SK-N-SH (cell line): ENCODE measurements at regions of chr1 and their contacts with region 1.

Region 1: GRCh38 chr1:236759252-236759859 is 35.7 kb upstream of the MTR start:
- DNase-seq: peak; percentile 44
- H3K4me3 ChIP-seq: no peak overlapping the region; a peak in 1 of 4 replicates
- H3K27ac ChIP-seq: no peak overlapping the region
- H3K4me1 ChIP-seq: no peaks in the 10 kb centered on the region; a peak in 1 of 4 replicates
- H3K27me3 ChIP-seq: no peaks in the 10 kb centered on the region
- CTCF ChIP-seq: peak; percentile 76
- EP300 ChIP-seq: no peak
- RAD21 ChIP-seq: peak; percentile 65

Region 2: DNA sequence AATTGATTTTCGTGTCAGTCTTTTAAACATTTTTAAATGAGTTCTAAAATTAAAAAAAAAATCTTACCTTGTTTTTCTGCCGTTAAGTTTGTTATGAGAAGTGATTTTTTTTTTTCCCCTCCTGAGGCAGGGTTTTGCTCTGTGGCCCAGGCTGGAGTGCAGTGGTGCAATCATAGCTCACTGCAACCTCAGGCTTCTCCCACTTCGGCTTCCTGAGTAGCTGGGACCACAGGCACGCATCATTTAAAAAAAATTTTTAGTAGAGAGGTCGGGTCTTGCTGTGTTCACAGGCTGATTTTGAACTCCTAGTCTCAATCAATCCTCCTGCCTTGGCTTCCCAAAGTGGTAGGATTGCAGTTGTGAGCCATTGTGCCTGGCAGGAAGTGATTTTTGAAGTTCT is 76.8 kb after region 1 on chr1:
- CTCF ChIA-PET with region 1: no interaction called
- POLR2A ChIA-PET with region 1: no interaction called
- DNase-seq: no peak
- H3K4me3 ChIP-seq: no peak overlapping the region
- H3K27ac ChIP-seq: no peak overlapping the region
- H3K4me1 ChIP-seq: no peaks in the 10 kb centered on the region
- H3K27me3 ChIP-seq: no peaks in the 10 kb centered on the region
- CTCF ChIP-seq: no peak
- EP300 ChIP-seq: no peak
- RAD21 ChIP-seq: no peak

Region 3: GRCh38 chr1:237386362-237387143 is 627.2 kb after region 1 on chr1:
- CTCF ChIA-PET with region 1: interaction called, 23 read pairs
- POLR2A ChIA-PET with region 1: no interaction called
- DNase-seq: peak; percentile 39
- H3K4me3 ChIP-seq: no peak overlapping the region; a peak in 1 of 4 replicates
- H3K27ac ChIP-seq: no peak overlapping the region
- H3K4me1 ChIP-seq: peaks cover 0 to 2% of the 10 kb centered on the region in 2 experiments; a peak in 1 of 4 replicates
- H3K27me3 ChIP-seq: no peaks in the 10 kb centered on the region
- CTCF ChIP-seq: peak; percentile 67
- EP300 ChIP-seq: no peak
- RAD21 ChIP-seq: peak; percentile 89